IMR-90 (cell line): ENCODE measurements at regions of chr12 and their contacts with region 1.

Region 1: DNA sequence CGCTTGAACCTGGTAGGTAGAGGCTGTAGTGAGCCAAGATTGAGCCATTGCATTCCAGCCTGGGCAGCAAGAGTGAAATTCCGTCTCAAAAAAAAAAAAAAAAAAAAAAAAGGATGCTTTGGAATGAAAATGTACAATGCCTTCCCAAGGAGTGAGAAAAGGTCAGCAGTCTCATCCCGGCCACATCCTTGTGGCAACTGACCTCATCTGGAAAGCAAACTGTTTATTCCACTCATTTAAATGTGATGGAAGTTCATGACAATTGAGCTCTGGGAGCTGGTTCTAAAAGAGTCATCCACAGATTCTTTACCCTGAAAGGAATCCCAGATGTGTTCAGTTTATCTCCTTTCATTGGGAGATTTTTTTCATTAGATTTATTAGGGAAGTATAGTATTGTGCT is 19.4 kb upstream of the LIMA1 start:
- DNase-seq: peak; percentile 85
- ATAC-seq: peak; percentile 83
- H3K4me3 ChIP-seq: no peak overlapping the region
- H3K27ac ChIP-seq: no peak overlapping the region
- H3K4me1 ChIP-seq: peaks cover 7% of the 10 kb centered on the region
- H3K27me3 ChIP-seq: no peaks in the 10 kb centered on the region
- CTCF ChIP-seq: no peak
- POLR2A ChIP-seq: no peak
- RAD21 ChIP-seq: no peak

Region 2: GRCh38 chr12:49983892-49984291 is 318.8 kb before region 1 on chr12:
- CTCF ChIA-PET with region 1: no interaction called
- POLR2A ChIA-PET with region 1: interaction called, 23 read pairs
- dilution Hi-C with region 1: no loop called
- in situ Hi-C with region 1: no loop called
- intact Hi-C with region 1: no loop called
- DNase-seq: peak; percentile 92
- ATAC-seq: peak; percentile 96
- H3K4me3 ChIP-seq: no peak overlapping the region
- H3K27ac ChIP-seq: peak overlapping the region; percentile 33; the same call in 1 of the 2 replicates
- H3K4me1 ChIP-seq: peaks cover 16% of the 10 kb centered on the region
- H3K27me3 ChIP-seq: no peaks in the 10 kb centered on the region
- CTCF ChIP-seq: 0 out of 2 replicates have a peak, but pooled peaks have one; percentile 18
- POLR2A ChIP-seq: no peak
- RAD21 ChIP-seq: peak; percentile 17; the same call in 1 of the 2 replicates

Region 3: GRCh38 chr12:50271280-50272247 is 31.1 kb before region 1 on chr12:
- CTCF ChIA-PET with region 1: interaction called, 10 read pairs
- POLR2A ChIA-PET with region 1: no interaction called
- dilution Hi-C with region 1: no loop called
- in situ Hi-C with region 1: no loop called
- intact Hi-C with region 1: no loop called
- DNase-seq: peak; percentile 55
- ATAC-seq: peak; percentile 72
- H3K4me3 ChIP-seq: no peak overlapping the region
- H3K27ac ChIP-seq: peak overlapping the region; percentile 68; the same call in 1 of the 2 replicates
- H3K4me1 ChIP-seq: no peaks in the 10 kb centered on the region; the same call in 1 of the 2 replicates
- H3K27me3 ChIP-seq: no peaks in the 10 kb centered on the region
- CTCF ChIP-seq: no peak
- POLR2A ChIP-seq: no peak
- RAD21 ChIP-seq: no peak

Region 4: GRCh38 chr12:50517456-50518048 is 214.9 kb after region 1 on chr12:
- CTCF ChIA-PET with region 1: no interaction called
- POLR2A ChIA-PET with region 1: no interaction called
- dilution Hi-C with region 1: no loop called
- in situ Hi-C with region 1: no loop called
- intact Hi-C with region 1: no loop called
- DNase-seq: peak; percentile 84
- ATAC-seq: peak; percentile 92
- H3K4me3 ChIP-seq: peak overlapping the region; percentile 29; the same call in 1 of the 2 replicates
- H3K27ac ChIP-seq: peak overlapping the region; percentile 45; the same call in 1 of the 2 replicates
- H3K4me1 ChIP-seq: peaks cover 13% of the 10 kb centered on the region
- H3K27me3 ChIP-seq: no peaks in the 10 kb centered on the region
- CTCF ChIP-seq: no peak
- POLR2A ChIP-seq: no peak
- RAD21 ChIP-seq: peak; percentile 5; the same call in 1 of the 2 replicates